ENCODE measurements at regions of chr3 and their contacts with region 1.

Region 1: DNA sequence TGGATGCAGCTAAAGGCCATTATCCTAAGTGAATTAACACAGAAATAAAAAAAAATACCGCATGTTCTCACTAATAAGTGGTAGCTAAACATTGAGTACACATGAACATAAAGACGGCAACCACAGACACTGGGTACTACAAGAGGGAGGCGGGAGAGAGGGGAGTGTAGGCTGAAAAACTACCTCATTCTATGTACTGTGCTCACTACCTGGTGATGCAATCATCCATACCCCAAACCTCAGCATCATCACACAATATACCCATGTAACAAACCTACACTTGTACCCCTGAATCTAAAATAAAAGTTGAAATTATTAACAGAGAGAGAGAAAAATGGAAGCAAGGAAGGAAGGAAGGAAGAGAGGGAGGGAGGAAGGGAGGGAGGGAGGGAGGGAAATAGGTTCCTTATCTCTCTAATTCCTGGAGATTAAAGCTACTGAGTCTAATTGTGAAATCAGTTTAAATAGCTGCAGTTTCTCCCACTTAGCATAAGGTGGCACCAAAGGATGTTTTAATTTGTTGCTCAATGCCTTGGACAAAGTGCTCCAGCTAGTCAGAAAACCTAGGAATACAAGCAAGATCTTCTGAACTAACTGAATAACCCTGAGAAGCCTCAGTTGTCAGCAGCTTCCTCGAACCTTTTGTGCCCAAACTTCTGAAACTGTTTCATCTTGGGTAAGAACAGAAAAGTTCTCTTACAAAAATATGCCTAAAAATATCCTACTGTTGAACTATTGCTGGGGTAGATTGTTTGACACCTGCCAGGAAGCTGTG is 79.4 kb upstream of the ATP11B start:
- DNase-seq: peak; percentile 29 to 66 (median 55)
- H3K4me3 ChIP-seq: no peak overlapping the region
- H3K4me3 Mint-ChIP-seq: no peak overlapping the region
- H3K27ac ChIP-seq: no peak overlapping the region
- H3K27ac Mint-ChIP-seq: peak overlapping the region in 2 of 7 donors; percentile 4 to 46
- H3K4me1 ChIP-seq: peaks cover 14 to 15% of the 10 kb centered on the region in 2 donors
- H3K4me1 Mint-ChIP-seq: peaks cover 17% of the 10 kb centered on the region
- H3K27me3 ChIP-seq: no peaks in the 10 kb centered on the region
- H3K27me3 Mint-ChIP-seq: no peaks in the 10 kb centered on the region
- CTCF ChIP-seq: peak; percentile 75

Region 2: DNA sequence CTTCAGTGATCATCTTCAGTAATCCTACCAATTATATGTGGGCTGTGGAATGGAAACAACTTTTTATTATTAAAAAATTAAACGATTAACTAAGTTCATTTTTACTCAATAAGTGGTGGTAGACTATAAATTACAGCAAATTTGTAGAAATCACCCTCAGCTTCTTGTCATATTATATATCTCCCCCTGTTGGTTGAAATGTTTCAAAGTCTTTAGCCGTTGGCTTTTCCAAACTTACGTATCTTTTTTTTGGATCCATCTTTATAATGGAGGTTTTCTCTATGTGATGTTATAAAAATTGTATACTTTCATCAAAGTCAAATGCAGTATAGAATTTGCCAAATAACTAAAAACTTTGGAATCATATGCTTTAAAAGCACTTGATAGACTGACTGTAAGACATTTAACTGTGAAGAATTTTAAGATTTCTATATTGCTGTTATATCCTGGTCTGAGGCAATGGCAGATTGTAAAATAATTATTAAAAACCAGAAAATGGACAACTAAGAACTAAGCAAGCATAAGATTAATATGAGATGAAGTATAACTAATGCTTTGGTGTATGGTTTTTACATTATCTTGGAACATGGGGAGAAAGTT is 124.0 kb after region 1 on chr3:
- intact Hi-C with region 1: loop called (anchors 2 to 10 kb)
- DNase-seq: peak in 2 of 3 donors; percentile 5 to 9
- H3K4me3 ChIP-seq: no peak overlapping the region
- H3K4me3 Mint-ChIP-seq: no peak overlapping the region
- H3K27ac ChIP-seq: no peak overlapping the region
- H3K27ac Mint-ChIP-seq: no peak overlapping the region
- H3K4me1 ChIP-seq: no peaks in the 10 kb centered on the region
- H3K4me1 Mint-ChIP-seq: no peaks in the 10 kb centered on the region
- H3K27me3 ChIP-seq: no peaks in the 10 kb centered on the region
- H3K27me3 Mint-ChIP-seq: no peaks in the 10 kb centered on the region
- CTCF ChIP-seq: peak; percentile 55